CD8-positive, alpha-beta T cell (primary cell): ENCODE measurements at regions of chr4 and their contacts with region 1.

Region 1: DNA sequence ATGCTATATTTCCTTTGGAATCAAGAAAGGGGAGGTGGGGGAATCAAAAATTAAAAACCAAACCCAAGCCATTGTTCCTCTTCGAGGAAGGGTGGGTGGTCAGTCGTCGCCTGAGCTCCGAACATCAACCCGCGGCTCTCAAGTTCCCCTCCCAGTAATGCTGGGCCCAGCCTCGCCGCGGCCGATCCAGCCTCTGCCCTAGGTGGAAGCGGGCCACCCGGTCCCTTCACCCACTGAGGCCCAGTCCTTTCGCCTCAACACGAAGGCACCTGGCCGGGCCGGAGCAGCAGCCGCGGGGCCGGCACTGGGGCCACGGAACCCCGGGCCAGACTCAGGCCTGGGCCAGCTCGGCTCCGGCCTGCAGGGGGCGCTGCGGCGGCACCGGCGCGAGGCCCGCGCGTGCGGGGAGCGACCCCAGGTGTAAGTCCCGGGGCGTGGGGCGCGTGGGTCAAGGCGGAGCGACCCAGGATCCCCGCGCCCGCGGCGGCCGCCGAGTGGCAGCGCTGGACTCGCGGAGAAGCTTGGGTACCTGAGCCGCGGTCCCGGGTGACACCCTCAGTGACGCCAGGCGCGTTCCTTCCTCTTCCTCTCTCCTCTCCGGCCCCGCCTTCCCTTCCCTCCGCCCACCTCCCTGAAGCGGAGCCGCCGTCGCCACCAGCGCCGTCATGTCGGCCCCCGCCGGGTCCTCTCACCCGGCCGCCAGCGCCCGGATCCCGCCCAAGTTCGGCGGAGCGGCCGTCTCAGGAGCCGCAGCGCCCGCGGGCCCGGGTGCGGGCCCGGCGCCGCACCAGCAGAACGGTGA is at the start of gene SEC24B:
- DNase-seq: peak; percentile 78 to 95 (median 91)
- ATAC-seq: peak; percentile 92
- H3K4me3 ChIP-seq: peak within 1 kb of the TSS; percentile 72
- H3K4me3 Mint-ChIP-seq: peak within 1 kb of the TSS; percentile 90
- H3K27ac ChIP-seq: peak within 1 kb of the TSS; percentile 73 to 90
- H3K27ac Mint-ChIP-seq: peak within 1 kb of the TSS; percentile 95
- H3K4me1 ChIP-seq: peaks cover 29% of the 10 kb centered on the region
- H3K4me1 Mint-ChIP-seq: peaks cover 49% of the 10 kb centered on the region
- H3K27me3 ChIP-seq: no peaks in the 10 kb centered on the region
- H3K27me3 Mint-ChIP-seq: no peaks in the 10 kb centered on the region
- CTCF ChIP-seq: peak; percentile 97
- total RNA-seq, gene SEC24B: 40.6 to 42.9 TPM

Region 2: GRCh38 chr4:109114501-109114900 is 318.9 kb before region 1 on chr4:
- CTCF ChIA-PET with region 1: no interaction called
- POLR2A ChIA-PET with region 1: no interaction called
- intact Hi-C with region 1: no loop called
- DNase-seq: no peak
- ATAC-seq: no peak
- H3K4me3 ChIP-seq: no peak overlapping the region
- H3K4me3 Mint-ChIP-seq: no peak overlapping the region
- H3K27ac ChIP-seq: no peak overlapping the region
- H3K27ac Mint-ChIP-seq: no peak overlapping the region
- H3K4me1 ChIP-seq: no peaks in the 10 kb centered on the region
- H3K4me1 Mint-ChIP-seq: no peaks in the 10 kb centered on the region
- H3K27me3 ChIP-seq: peaks cover 0 to 3% of the 10 kb centered on the region in 2 experiments
- H3K27me3 Mint-ChIP-seq: peaks cover 11% of the 10 kb centered on the region
- CTCF ChIP-seq: no peak

Region 3: GRCh38 chr4:109465069-109465468 is 31.7 kb after region 1 on chr4:
- CTCF ChIA-PET with region 1: interaction called, 3 read pairs
- POLR2A ChIA-PET with region 1: interaction called, 4 read pairs
- intact Hi-C with region 1: loop called in 1 of 2 experiments (anchors 5 kb)
- DNase-seq: no peak
- ATAC-seq: no peak
- H3K4me3 ChIP-seq: no peak overlapping the region
- H3K4me3 Mint-ChIP-seq: no peak overlapping the region
- H3K27ac ChIP-seq: no peak overlapping the region
- H3K27ac Mint-ChIP-seq: no peak overlapping the region
- H3K4me1 ChIP-seq: peaks cover 10% of the 10 kb centered on the region
- H3K4me1 Mint-ChIP-seq: peaks cover 55% of the 10 kb centered on the region
- H3K27me3 ChIP-seq: no peaks in the 10 kb centered on the region
- H3K27me3 Mint-ChIP-seq: no peaks in the 10 kb centered on the region
- CTCF ChIP-seq: no peak

Region 4: GRCh38 chr4:109559983-109560686 is 126.7 kb after region 1 on chr4 and contains the start of gene MCUB:
- CTCF ChIA-PET with region 1: interaction called, 3 read pairs
- POLR2A ChIA-PET with region 1: interaction called, 8 read pairs
- intact Hi-C with region 1: loop called (anchors 1 kb)
- DNase-seq: peak; percentile 81 to 96 (median 90)
- ATAC-seq: peak; percentile 87
- H3K4me3 ChIP-seq: peak within 1 kb of the TSS; percentile 96
- H3K4me3 Mint-ChIP-seq: peak within 1 kb of the TSS; percentile 97
- H3K27ac ChIP-seq: peak within 1 kb of the TSS; percentile 91 to 92
- H3K27ac Mint-ChIP-seq: peak within 1 kb of the TSS; percentile 97
- H3K4me1 ChIP-seq: peaks cover 50% of the 10 kb centered on the region
- H3K4me1 Mint-ChIP-seq: peaks cover 58% of the 10 kb centered on the region
- H3K27me3 ChIP-seq: no peaks in the 10 kb centered on the region
- H3K27me3 Mint-ChIP-seq: no peaks in the 10 kb centered on the region
- CTCF ChIP-seq: no peak
- total RNA-seq, gene MCUB: 84.3 to 91.9 TPM

Region 5: DNA sequence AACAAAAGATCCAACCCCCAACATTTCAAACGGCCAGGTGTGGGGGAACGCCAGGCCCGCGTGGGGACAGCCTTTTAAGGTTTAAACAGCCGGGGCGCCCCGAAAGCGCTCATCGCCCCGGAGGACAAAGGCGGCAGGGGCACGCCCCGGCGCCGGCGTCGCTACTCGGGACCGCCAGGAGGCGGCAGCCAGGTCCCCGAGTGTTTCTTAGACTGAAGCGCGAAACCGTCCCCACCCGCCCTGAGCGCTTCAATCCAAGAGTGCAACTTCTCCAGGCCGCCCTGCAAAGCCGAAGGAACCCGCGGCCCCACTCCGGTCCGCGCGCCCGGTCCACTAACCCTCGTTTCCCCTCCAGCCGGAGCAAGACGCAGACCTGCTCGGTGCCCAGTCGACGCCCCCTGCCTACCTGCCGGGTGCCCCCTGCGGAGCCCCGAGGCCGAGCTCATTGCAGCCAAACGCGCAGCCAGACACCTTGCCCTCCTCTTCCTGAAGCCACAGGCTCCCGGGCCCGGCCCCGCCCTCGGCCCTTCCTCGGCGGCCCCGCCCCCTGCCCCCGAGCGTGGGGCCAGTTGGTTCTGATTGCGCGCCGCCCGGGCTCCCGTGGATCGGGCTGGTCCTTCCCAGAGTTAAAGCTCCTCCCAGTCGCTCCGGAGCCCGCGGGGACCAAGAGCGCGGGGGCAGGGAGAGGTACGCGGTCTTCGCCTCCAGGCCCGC is 269.7 kb after region 1 on chr4 and contains the start of gene CASP6:
- CTCF ChIA-PET with region 1: interaction called, 3 read pairs
- POLR2A ChIA-PET with region 1: interaction called, 3 read pairs
- intact Hi-C with region 1: loop called (anchors 1 to 2 kb)
- DNase-seq: peak; percentile 52 to 87 (median 77)
- ATAC-seq: peak; percentile 89
- H3K4me3 ChIP-seq: peak within 1 kb of the TSS; percentile 72 to 85
- H3K4me3 Mint-ChIP-seq: peak within 1 kb of the TSS; percentile 94
- H3K27ac ChIP-seq: peak within 1 kb of the TSS; percentile 48 to 66
- H3K27ac Mint-ChIP-seq: peak within 1 kb of the TSS; percentile 94
- H3K4me1 ChIP-seq: peaks cover 15% of the 10 kb centered on the region
- H3K4me1 Mint-ChIP-seq: peaks cover 38% of the 10 kb centered on the region
- H3K27me3 ChIP-seq: no peaks in the 10 kb centered on the region
- H3K27me3 Mint-ChIP-seq: no peaks in the 10 kb centered on the region
- CTCF ChIP-seq: peak; percentile 67
- total RNA-seq, gene CASP6: 3.4 to 6.7 TPM

Region 6: DNA sequence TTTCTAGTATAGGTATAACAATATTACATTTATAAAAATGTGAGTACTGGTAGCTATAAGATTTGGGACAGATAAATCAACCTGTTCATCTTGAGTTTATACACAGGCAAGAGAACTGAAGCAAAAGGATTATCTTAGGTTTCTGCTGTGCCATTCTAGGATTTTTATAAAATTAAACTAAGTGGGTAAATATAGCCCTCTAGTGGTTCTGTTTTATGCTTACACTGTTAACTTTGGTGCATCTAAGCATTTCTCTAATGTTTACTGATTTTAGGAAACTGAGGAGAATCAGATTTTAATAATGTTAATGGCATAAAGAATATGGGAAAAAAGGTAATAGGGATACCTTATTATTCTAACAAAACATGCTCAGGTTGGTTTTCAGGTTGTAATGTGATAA is 393.3 kb after region 1 on chr4:
- CTCF ChIA-PET with region 1: interaction called, 12 read pairs
- POLR2A ChIA-PET with region 1: no interaction called
- intact Hi-C with region 1: no loop called
- DNase-seq: peak in 2 of 9 experiments; percentile 24 to 46
- ATAC-seq: peak; percentile 65
- H3K4me3 ChIP-seq: no peak overlapping the region
- H3K4me3 Mint-ChIP-seq: no peak overlapping the region
- H3K27ac ChIP-seq: no peak overlapping the region
- H3K27ac Mint-ChIP-seq: no peak overlapping the region
- H3K4me1 ChIP-seq: no peaks in the 10 kb centered on the region
- H3K4me1 Mint-ChIP-seq: peaks cover 2% of the 10 kb centered on the region
- H3K27me3 ChIP-seq: no peaks in the 10 kb centered on the region
- H3K27me3 Mint-ChIP-seq: no peaks in the 10 kb centered on the region
- CTCF ChIP-seq: peak; percentile 84